ENCODE measurements at regions of chr20 and their contacts with region 1.

Region 1: DNA sequence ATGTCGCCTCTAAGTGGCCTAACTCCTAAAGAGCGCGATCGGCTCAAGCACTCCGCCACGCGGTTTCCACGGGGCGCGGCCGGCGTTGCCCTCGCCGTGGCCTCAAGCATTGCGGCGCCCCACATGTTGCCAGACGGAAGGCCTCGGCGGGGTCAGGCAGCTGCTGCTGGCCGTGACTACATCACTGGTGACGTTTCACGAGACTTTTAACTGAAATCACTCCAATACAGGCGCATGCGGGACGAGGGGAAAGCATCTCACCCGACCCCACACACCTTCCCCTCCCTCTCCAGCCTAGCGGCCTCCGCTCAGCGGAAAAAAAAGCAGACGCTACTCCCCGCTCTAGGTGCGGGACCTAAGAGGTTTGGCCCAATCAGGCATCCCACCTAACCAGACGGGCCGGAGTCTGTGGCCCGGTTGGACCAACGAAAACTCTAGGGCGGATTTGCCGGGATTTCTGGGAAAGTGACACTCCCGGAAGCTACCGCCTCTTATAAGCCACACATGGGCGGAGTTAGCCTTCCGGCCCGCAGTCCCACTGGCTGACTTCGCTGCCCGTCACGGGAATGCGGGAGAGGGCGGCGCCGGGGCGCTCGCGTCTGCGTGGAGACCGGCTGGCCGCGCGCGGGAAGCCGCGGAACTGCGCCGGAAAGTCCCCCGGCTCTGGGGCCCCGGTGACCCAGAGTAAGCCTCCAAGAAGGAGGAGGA is at the start of gene NXT1:
- DNase-seq: peak; percentile 94 to 99 (median 98)
- H3K4me3 ChIP-seq: peak within 1 kb of the TSS; percentile 67 to 100 (median 97)
- H3K27ac ChIP-seq: peak within 1 kb of the TSS; percentile 84 to 100 (median 98)
- H3K27me3 ChIP-seq: no peaks in the 10 kb centered on the region
- CTCF ChIP-seq: peak in 11 of 56 donors; percentile 0 to 32 (median 20)
- total RNA-seq, gene NXT1: 3.2 to 13.1 (median 6.7) TPM

Region 2: DNA sequence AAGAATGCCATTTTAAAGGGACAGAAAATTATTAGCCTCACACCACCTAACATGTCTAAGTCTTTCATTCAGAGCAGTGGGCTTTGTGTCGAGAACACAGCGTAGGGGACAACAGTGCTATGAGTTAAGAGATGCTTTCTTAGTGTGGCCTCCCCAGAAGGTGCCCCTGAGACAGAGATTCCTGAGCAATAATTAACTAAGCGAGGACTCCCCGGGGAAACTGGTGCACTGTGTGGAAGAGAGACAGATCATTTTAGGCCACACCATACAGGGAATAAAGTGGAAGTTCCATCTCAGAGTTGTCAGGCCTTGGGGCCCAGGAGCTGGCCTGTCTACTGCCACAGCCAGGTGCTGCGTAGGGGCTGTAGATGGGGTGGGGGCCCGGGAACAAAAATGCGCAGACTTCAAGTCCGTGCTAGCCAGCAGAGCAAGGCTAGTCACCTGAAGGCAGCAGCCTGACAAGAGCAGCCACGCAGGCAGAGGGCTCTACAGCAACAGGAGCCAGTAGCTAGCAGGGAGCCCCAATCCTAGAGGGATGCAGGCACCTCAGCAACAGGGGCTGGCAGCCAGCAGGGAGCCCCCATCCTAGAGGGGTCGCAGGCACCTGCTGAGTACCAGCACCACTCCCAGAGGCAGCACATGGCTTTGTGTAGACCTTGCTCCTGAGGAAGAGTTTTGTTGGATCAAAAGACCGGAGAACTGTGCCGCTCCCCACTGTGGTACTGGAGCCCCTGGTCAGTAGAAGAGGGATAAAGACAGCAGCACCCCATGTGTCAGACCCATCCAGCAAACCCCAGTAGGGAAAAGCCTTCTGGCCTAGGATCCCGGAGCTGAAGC is 62.8 kb before region 1 on chr20:
- intact Hi-C with region 1: no loop called
- DNase-seq: no peak
- H3K4me3 ChIP-seq: no peak overlapping the region
- H3K27ac ChIP-seq: no peak overlapping the region
- H3K27me3 ChIP-seq: peaks cover 0 to 10% (median 0%) of the 10 kb centered on the region in 45 donors
- CTCF ChIP-seq: no peak

Region 3: GRCh38 chr20:23331450-23332350 is 18.6 kb before region 1 on chr20:
- intact Hi-C with region 1: no loop called
- DNase-seq: no peak
- H3K4me3 ChIP-seq: no peak overlapping the region
- H3K27ac ChIP-seq: no peak overlapping the region
- H3K27me3 ChIP-seq: peaks cover 0 to 3% (median 0%) of the 10 kb centered on the region in 45 donors
- CTCF ChIP-seq: no peak

Region 4: GRCh38 chr20:23606652-23607049 is 256.3 kb after region 1 on chr20:
- intact Hi-C with region 1: loop called in 1 of 2 experiments (anchors 5 kb)
- DNase-seq: peak in 9 of 10 donors; percentile 49 to 83 (median 74)
- H3K4me3 ChIP-seq: no peak overlapping the region
- H3K27ac ChIP-seq: no peak overlapping the region
- H3K27me3 ChIP-seq: peaks cover 0 to 8% (median 0%) of the 10 kb centered on the region in 45 donors
- CTCF ChIP-seq: peak; percentile 40 to 89 (median 80)